Left colon (tissue), 2 donors: ENCODE measurements at regions of chr1 and their contacts with region 1.

Region 1: DNA sequence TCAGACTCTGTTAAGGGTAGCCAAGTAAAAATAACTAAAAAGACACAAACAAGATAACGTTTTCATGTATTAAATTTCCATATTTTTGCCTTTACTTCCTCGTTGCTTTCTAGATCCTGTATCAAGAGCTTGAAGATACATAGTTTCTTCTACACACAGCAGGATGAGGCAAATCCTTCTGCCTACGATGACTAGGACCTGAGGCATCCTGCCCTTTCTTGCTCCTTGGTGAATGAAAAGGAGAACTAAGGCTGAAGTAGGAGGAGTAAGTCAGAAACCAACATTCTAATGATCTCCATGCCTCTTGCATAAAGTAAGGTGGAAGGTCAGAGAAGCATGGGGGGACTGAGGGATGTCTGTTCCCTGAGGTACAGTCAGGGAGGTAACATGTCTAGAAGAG is 102.6 kb downstream of the GPATCH2 start:
- DNase-seq: no peak
- ATAC-seq: no peak

Region 2: DNA sequence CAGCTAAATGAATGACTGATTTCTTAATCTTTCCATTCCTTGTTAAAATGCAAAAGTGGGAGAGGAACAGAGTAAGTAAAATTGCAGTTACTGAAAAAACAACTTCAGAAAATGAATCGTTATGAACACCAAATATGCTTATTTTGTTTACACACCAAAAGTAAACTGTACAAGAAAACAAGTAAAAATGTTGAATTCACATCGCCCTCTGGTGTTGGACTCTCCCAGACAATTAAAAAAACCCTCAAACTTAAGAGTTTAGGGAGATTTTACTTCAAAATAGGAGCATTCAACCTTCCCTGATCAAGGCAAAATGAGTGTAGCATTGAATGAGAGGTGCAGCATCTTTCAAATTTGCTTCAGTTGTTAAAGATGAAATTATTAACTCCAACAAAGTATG is 785.6 kb before region 1 on chr1:
- intact Hi-C with region 1: loop called in 1 of 2 experiments (anchors 5 kb)
- DNase-seq: no peak
- ATAC-seq: no peak